ENCODE measurements at regions of chrX and their contacts with region 1.

Region 1: DNA sequence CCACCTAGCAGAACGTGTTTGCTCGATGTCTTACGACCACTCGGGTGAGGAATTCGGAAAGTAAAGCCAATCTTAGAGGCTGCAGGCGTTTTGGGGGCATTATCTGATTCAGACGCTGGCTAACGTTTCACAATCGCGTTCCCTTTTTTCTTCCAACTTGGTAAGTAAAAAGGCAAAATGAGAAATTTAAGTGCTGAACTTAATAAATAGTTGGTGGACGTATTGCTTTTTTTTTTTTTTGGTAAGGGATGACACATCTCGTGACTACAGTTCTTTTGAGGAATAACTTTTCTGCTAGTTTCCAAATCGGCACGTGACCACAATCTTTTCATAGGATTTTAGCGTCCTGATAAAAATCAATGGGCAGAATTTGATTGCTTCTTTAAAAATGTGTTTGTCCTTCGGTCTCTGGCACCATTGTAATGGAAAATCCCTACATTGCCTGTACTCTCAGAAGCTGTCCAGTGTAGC is 848 bp downstream of the RAB9A start:
- DNase-seq: no peak
- H3K4me3 Mint-ChIP-seq: peak overlapping the region; percentile 86
- H3K27ac Mint-ChIP-seq: peak overlapping the region; percentile 95
- H3K4me1 Mint-ChIP-seq: peaks cover 44% of the 10 kb centered on the region
- H3K27me3 Mint-ChIP-seq: no peaks in the 10 kb centered on the region
- CTCF ChIP-seq: no peak

Region 2: DNA sequence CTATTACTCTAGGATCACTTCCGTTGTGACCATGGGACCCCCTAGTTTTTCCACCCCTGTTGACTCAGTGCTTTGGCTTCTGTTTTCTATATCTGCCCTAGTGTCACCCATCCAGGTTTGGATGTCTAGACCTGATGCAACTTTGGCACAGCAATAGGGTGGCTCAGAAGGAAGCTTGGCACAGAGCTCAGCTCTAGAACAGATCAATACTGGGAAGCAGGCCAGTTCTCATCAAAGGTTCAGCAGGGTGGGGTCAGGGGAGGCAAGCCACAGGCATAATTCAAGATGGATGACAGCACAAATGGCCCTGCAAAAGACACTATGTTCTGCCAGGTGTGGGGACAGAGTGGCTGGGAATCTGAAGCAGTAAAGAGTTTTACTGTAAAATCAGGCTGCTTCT is 194.5 kb before region 1 on chrX:
- CTCF ChIA-PET with region 1: no interaction called
- intact Hi-C with region 1: no loop called
- DNase-seq: peak; percentile 81
- H3K4me3 Mint-ChIP-seq: no peak overlapping the region
- H3K27ac Mint-ChIP-seq: peak overlapping the region; percentile 80
- H3K4me1 Mint-ChIP-seq: peaks cover 21% of the 10 kb centered on the region
- H3K27me3 Mint-ChIP-seq: no peaks in the 10 kb centered on the region
- CTCF ChIP-seq: no peak

Region 3: GRCh38 chrX:13658602-13659001 is 31.2 kb before region 1 on chrX:
- CTCF ChIA-PET with region 1: interaction called, 3 read pairs
- intact Hi-C with region 1: loop called (anchors 1 kb)
- DNase-seq: peak; percentile 23
- H3K4me3 Mint-ChIP-seq: no peak overlapping the region
- H3K27ac Mint-ChIP-seq: peak overlapping the region; percentile 17
- H3K4me1 Mint-ChIP-seq: peaks cover 11% of the 10 kb centered on the region
- H3K27me3 Mint-ChIP-seq: no peaks in the 10 kb centered on the region
- CTCF ChIP-seq: peak; percentile 44

Region 4: DNA sequence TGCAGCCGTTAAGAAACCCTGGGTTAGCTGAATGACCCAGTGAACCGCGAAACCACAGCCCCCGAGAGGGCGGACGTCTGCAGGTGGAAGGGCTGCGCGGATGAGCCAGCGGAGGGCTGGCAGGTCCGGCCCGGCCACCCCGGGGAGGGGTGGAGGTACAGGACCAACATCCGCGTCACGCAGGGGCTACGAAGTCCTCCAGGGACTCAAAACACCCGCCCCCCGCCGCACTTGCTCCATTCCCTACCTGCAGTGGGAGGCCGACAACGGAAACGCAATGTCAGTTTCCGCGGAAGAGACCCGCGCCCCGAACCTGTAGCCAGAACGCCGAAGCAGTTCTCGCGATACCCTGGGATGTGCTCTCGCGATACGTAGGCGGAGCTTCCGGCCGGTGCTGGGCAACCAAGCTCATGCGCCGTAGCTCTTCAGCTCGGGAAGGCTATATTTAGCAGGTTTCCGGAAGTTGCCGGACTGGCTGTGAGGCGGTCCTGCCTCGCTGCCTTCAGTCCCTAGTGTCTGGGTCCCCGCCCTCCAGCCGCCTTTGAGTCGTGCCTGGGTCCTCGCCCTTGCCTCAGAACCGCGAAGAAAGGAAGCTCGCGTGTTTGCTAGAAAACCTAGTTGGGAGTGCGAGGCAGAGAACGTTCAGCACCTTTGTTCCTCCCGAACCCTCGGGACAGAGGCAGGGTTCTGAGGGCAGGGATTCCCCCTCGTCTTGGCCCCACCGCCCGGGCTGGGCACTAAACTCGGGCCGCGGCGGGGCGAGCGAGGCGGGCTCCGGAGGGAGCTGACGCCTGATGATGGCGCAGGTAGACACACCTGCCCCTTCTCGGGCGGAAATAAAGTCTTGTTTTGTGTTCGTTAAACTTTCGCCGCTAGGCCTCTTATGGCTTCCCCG is 44.7 kb after region 1 on chrX and contains the starts of genes OFD1 and TRAPPC2:
- CTCF ChIA-PET with region 1: interaction called, 3 read pairs
- intact Hi-C with region 1: loop called (anchors 5 kb)
- DNase-seq: peak; percentile 90
- H3K4me3 Mint-ChIP-seq: peak within 1 kb of the TSS; percentile 98
- H3K27ac Mint-ChIP-seq: peak within 1 kb of the TSS; percentile 100
- H3K4me1 Mint-ChIP-seq: peaks cover 26% of the 10 kb centered on the region
- H3K27me3 Mint-ChIP-seq: no peaks in the 10 kb centered on the region
- CTCF ChIP-seq: no peak
- total RNA-seq, gene OFD1: 46.4 and 57.0 TPM in 2 replicates
- total RNA-seq, gene TRAPPC2: 20.8 and 25.1 TPM in 2 replicates

Measured in Calu3 (cell line).